Left cardiac atrium (tissue), 4 donors: ENCODE measurements at regions of chr6 and their contacts with region 1.

Region 1: GRCh38 chr6:137165375-137166246 is 7.8 kb downstream of the IL22RA2 start:
- DNase-seq: no peak
- ATAC-seq: peak in 1 of 2 donors; percentile 16

Region 2: GRCh38 chr6:137102851-137103492 is 62.6 kb before region 1 on chr6:
- intact Hi-C with region 1: loop called in 1 of 2 experiments (anchors 10 kb)
- DNase-seq: no peak
- ATAC-seq: no peak